ENCODE measurements at regions of chr3 and their contacts with region 1.

Region 1: DNA sequence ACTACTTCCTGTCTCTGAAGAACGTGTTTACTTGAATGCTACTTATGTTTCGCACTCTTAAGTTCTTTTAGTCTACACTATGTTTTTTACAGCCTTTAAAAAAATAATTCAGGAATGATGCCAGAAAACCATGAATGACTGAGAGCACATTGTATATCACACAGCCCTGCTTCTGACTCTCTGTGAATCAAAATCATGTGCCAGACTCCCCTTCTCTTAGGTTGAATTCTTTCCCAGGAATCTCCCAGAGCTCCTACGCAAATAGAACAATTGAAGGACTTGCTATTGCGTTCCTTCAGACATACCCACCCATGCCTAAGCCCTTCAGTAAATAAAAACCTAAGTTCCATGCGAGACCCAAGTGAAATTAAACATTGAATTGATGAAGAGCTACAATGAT is 782.0 kb upstream of the ALCAM start:
- DNase-seq: no peak
- ATAC-seq: no peak
- H3K4me3 ChIP-seq: no peak overlapping the region
- H3K27ac ChIP-seq: no peak overlapping the region
- H3K4me1 ChIP-seq: no peaks in the 10 kb centered on the region
- H3K27me3 ChIP-seq: no peaks in the 10 kb centered on the region
- CTCF ChIP-seq: no peak
- EP300 ChIP-seq: no peak
- POLR2A ChIP-seq: no peak
- RAD21 ChIP-seq: no peak

Region 2: DNA sequence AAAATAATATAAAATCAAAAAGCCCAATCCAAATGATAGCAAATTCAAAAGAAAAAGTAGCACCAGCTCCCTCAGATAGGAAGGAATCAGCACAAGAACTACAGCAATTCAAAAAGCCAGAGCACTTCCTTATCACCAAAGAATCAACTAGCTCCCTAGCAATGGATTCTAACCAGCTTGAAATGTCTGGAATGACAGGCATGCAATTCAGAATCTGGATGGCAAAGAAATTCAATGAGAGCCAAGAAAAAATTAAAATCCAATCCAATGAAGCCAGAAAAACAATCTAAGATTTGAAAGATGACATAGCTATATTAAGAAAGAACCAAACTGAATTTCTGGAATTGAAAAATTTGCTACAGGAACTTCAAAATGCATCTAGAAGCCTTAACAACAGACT is 552.4 kb before region 1 on chr3:
- CTCF ChIA-PET with region 1: no interaction called
- POLR2A ChIA-PET with region 1: no interaction called
- in situ Hi-C with region 1: no loop called
- intact Hi-C with region 1: no loop called
- DNase-seq: no peak
- ATAC-seq: no peak
- H3K4me3 ChIP-seq: no peak overlapping the region
- H3K27ac ChIP-seq: no peak overlapping the region
- H3K4me1 ChIP-seq: no peaks in the 10 kb centered on the region
- H3K27me3 ChIP-seq: no peaks in the 10 kb centered on the region
- CTCF ChIP-seq: no peak
- EP300 ChIP-seq: no peak
- POLR2A ChIP-seq: no peak
- RAD21 ChIP-seq: no peak

Region 3: DNA sequence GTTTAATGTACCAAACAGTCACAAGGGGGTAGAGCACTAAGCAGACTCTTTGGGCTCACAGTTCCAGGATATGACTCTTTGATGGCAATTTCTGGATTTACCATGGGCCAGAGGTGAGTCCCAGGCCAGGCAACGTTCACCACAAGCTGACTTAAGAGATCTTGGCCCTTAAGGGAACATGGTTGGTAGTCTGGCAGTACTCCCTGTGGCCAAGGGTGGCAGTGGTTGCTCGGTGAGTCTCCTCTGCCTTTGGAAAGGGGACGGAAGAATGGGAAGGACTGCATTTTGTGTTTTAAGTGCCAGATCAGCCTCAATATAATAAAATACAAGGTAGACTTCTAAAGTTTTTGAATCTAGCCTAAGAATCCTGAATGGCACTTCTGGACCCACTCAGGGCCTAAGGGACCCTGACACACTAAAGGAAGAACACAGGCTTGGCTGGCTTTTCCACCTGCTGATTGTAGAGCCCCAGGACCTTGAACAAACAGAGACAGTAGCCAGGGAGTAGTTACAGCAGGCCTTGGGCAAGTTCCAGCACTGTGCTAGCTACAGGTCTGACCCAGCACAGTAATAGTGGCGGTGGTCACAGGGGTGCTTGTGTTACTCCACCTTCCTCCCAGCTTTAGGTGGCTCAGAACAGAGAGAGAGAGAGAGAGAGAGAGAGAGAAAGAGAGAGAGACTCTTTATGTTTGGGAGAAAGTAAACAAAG is 51.3 kb after region 1 on chr3:
- CTCF ChIA-PET with region 1: no interaction called
- POLR2A ChIA-PET with region 1: no interaction called
- in situ Hi-C with region 1: no loop called
- intact Hi-C with region 1: loop called (anchors 1 kb)
- DNase-seq: no peak
- ATAC-seq: peak; percentile 74
- H3K4me3 ChIP-seq: no peak overlapping the region
- H3K27ac ChIP-seq: no peak overlapping the region
- H3K4me1 ChIP-seq: no peaks in the 10 kb centered on the region
- H3K27me3 ChIP-seq: no peaks in the 10 kb centered on the region
- CTCF ChIP-seq: no peak
- EP300 ChIP-seq: no peak
- POLR2A ChIP-seq: no peak
- RAD21 ChIP-seq: no peak

Measured in HepG2 (cell line).